Breast epithelium (tissue), 4 donors: ENCODE measurements at regions of chr2 and their contacts with region 1.

Region 1: GRCh38 chr2:159124441-159124911 is 156.0 kb downstream of the TANC1 start:
- DNase-seq: no peak
- H3K4me3 ChIP-seq: no peak overlapping the region
- H3K27ac ChIP-seq: peak overlapping the region; percentile 54 to 58
- H3K4me1 ChIP-seq: no peaks in the 10 kb centered on the region
- H3K27me3 ChIP-seq: no peaks in the 10 kb centered on the region
- CTCF ChIP-seq: no peak
- POLR2A ChIP-seq: no peak

Region 2: DNA sequence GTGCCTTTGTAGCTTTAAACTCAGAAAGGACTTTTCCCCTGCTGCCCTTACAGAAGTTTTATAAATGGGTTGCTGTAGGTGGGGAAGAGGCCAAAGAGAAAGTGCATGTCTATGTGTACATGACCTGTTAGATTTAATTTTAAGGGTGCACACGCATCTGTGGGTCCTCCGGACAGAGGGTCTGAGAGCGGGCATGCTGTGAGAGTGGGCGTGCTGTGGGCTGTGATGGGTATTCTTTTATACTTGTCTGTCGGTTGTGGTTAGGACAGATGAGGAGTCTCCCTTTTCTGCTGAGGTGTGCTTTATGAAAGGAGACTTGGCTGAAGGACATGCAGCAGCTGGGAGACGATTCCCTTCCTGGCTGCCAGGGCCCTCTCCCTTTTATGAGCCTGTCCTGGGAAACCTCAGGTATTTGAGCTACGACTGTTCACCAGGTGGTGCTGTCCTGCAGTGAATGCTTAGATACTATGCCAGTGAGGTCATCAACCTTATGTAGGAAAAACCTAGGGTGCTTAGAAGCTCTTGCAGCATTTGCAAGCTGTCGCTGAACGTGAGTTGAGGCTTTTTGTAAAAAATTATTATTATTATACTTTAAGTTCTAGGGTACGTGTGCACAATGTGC is 88.6 kb before region 1 on chr2:
- intact Hi-C with region 1: loop called (anchors 10 kb)
- DNase-seq: peak in 1 of 2 donors; percentile 78
- H3K4me3 ChIP-seq: no peak overlapping the region
- H3K27ac ChIP-seq: peak overlapping the region in 1 of 2 donors; percentile 46
- H3K4me1 ChIP-seq: peaks cover 0 to 3% of the 10 kb centered on the region in 2 donors
- H3K27me3 ChIP-seq: no peaks in the 10 kb centered on the region
- CTCF ChIP-seq: peak in 2 of 3 donors; percentile 53 to 80
- POLR2A ChIP-seq: no peak